CD4-positive, alpha-beta memory T cell (primary cell): ENCODE measurements at regions of chr1 and their contacts with region 1.

Region 1: DNA sequence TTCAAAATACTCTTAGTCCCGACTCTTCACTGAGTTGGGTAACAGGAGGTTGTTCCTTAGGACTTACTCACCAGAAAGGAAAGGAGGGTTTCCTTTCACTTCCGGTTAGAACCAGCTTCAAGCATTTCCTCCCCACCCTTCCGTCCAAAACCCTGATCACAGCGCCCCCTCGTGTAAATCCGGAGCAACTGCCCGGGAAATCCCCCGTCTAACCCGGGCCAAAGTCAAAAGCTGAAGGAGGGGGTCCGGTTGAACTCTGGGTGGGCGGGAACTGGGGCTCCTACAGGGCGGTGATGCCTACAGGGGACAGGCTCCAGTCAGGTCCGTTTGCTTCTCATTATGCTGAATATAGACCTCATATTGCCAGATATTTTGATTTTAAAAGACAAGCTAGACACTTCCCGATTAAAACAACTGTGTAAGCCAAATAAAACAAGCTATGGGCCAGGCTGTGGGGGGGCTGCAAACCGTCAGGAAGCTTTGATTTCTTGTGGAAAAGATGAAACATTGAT is 15.0 kb upstream of the MTARC2 start:
- DNase-seq: peak; percentile 71 to 77 (median 76)
- H3K4me3 ChIP-seq: peak overlapping the region in 1 of 2 donors; percentile 10
- H3K4me3 Mint-ChIP-seq: peak overlapping the region; percentile 46 to 79 (median 72)
- H3K27ac ChIP-seq: no peak overlapping the region
- H3K27ac Mint-ChIP-seq: peak overlapping the region; percentile 17 to 87 (median 49)
- H3K4me1 ChIP-seq: peaks cover 13% of the 10 kb centered on the region
- H3K4me1 Mint-ChIP-seq: peaks cover 8 to 18% (median 14%) of the 10 kb centered on the region in 4 donors
- H3K27me3 ChIP-seq: no peaks in the 10 kb centered on the region
- H3K27me3 Mint-ChIP-seq: peaks cover 0 to 2% of the 10 kb centered on the region in 2 donors

Region 2: DNA sequence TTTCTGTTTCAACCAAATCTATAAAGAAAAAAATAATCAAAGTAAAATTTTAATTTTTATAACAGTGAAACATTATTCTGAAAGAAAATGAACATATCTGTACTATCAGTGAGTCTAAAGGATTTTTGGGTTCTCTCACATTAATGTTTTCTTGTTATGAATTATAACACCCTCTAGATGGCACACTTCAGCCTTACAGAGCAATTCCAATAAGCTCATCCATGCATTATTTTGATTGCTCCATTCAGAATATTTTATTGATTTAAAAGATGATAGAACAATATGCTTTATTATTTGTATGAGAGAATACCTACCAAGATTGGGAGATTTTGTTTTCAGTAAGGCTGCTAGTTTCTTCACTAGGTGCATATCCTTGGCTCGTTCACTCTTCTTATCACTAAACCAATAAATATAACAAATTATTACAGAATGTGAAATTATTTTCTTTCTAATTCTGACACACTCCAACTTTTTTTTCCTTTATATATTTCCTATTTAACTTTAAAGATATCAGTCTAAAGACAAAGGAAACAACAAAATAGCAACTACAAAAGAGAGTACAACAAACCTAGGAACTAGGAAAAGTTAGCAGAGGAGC is 543.3 kb before region 1 on chr1:
- CTCF ChIA-PET with region 1: interaction called, 17 read pairs
- POLR2A ChIA-PET with region 1: no interaction called
- intact Hi-C with region 1: loop called (anchors 1 kb)
- DNase-seq: peak in 2 of 5 donors; percentile 4 to 8
- H3K4me3 ChIP-seq: no peak overlapping the region
- H3K4me3 Mint-ChIP-seq: no peak overlapping the region
- H3K27ac ChIP-seq: no peak overlapping the region
- H3K27ac Mint-ChIP-seq: peak overlapping the region in 1 of 7 donors; percentile 22
- H3K4me1 ChIP-seq: no peaks in the 10 kb centered on the region
- H3K4me1 Mint-ChIP-seq: peaks cover 0 to 3% (median under 1%) of the 10 kb centered on the region in 4 donors
- H3K27me3 ChIP-seq: no peaks in the 10 kb centered on the region
- H3K27me3 Mint-ChIP-seq: no peaks in the 10 kb centered on the region

Region 3: GRCh38 chr1:220217383-220217988 is 515.7 kb before region 1 on chr1:
- CTCF ChIA-PET with region 1: interaction called, 5 read pairs
- POLR2A ChIA-PET with region 1: no interaction called
- intact Hi-C with region 1: loop called (anchors 5 kb)
- DNase-seq: peak in 1 of 5 donors; percentile 3
- H3K4me3 ChIP-seq: no peak overlapping the region
- H3K4me3 Mint-ChIP-seq: no peak overlapping the region
- H3K27ac ChIP-seq: no peak overlapping the region
- H3K27ac Mint-ChIP-seq: peak overlapping the region in 2 of 7 donors; percentile 6 to 10
- H3K4me1 ChIP-seq: peaks cover 32% of the 10 kb centered on the region
- H3K4me1 Mint-ChIP-seq: peaks cover 25 to 37% (median 30%) of the 10 kb centered on the region in 4 donors
- H3K27me3 ChIP-seq: no peaks in the 10 kb centered on the region
- H3K27me3 Mint-ChIP-seq: no peaks in the 10 kb centered on the region

Region 4: DNA sequence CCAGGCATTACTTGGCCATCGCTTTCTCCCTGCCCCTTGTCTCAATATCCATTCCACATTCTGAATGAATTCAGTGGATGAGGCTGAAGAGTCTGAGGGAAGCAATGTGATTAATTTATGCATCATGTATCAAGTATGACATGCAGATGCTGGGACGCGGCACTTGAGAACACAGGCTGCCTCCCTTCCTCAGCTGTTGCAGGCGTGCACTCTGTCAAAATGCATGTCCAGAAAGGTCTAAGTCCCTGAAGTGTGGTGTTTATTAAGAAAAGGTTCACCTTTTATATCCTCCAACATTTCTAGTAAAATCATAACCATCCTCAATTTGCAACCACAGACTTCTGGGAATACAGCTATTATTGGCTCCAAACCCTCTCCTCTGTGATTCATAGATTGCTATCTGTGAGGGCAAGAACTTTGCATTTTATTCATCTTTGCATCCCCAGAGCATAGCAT is 438.3 kb before region 1 on chr1:
- CTCF ChIA-PET with region 1: interaction called, 10 read pairs
- POLR2A ChIA-PET with region 1: no interaction called
- intact Hi-C with region 1: no loop called
- DNase-seq: no peak
- H3K4me3 ChIP-seq: no peak overlapping the region
- H3K4me3 Mint-ChIP-seq: no peak overlapping the region
- H3K27ac ChIP-seq: no peak overlapping the region
- H3K27ac Mint-ChIP-seq: no peak overlapping the region
- H3K4me1 ChIP-seq: no peaks in the 10 kb centered on the region
- H3K4me1 Mint-ChIP-seq: peaks cover 0 to 2% (median 0%) of the 10 kb centered on the region in 4 donors
- H3K27me3 ChIP-seq: no peaks in the 10 kb centered on the region
- H3K27me3 Mint-ChIP-seq: peaks cover 12 to 18% of the 10 kb centered on the region in 2 donors

Region 5: GRCh38 chr1:220680085-220680687 is 53.0 kb before region 1 on chr1:
- CTCF ChIA-PET with region 1: interaction called, 22 read pairs
- POLR2A ChIA-PET with region 1: no interaction called
- intact Hi-C with region 1: loop called (anchors 1 kb)
- DNase-seq: peak in 4 of 5 donors; percentile 11 to 39 (median 23)
- H3K4me3 ChIP-seq: no peak overlapping the region
- H3K4me3 Mint-ChIP-seq: no peak overlapping the region
- H3K27ac ChIP-seq: no peak overlapping the region
- H3K27ac Mint-ChIP-seq: peak overlapping the region in 1 of 7 donors; percentile 7
- H3K4me1 ChIP-seq: no peaks in the 10 kb centered on the region
- H3K4me1 Mint-ChIP-seq: peaks cover 0 to 4% (median 2%) of the 10 kb centered on the region in 4 donors
- H3K27me3 ChIP-seq: no peaks in the 10 kb centered on the region
- H3K27me3 Mint-ChIP-seq: peaks cover 0 to 2% of the 10 kb centered on the region in 2 donors

Region 6: GRCh38 chr1:220690140-220691025 is 42.8 kb before region 1 on chr1 and contains the start of gene C1orf115:
- CTCF ChIA-PET with region 1: interaction called, 31 read pairs
- POLR2A ChIA-PET with region 1: no interaction called
- intact Hi-C with region 1: loop called (anchors 1 kb)
- DNase-seq: peak; percentile 71 to 79 (median 74)
- H3K4me3 ChIP-seq: peak within 1 kb of the TSS in 1 of 2 donors; percentile 48
- H3K4me3 Mint-ChIP-seq: peak within 1 kb of the TSS; percentile 79 to 89 (median 84)
- H3K27ac ChIP-seq: no peak within 1 kb of the TSS
- H3K27ac Mint-ChIP-seq: peak within 1 kb of the TSS in 4 of 7 donors; percentile 24 to 77 (median 46)
- H3K4me1 ChIP-seq: peaks cover 15% of the 10 kb centered on the region
- H3K4me1 Mint-ChIP-seq: peaks cover 5 to 13% (median 7%) of the 10 kb centered on the region in 4 donors
- H3K27me3 ChIP-seq: no peaks in the 10 kb centered on the region
- H3K27me3 Mint-ChIP-seq: peaks cover 3 to 7% of the 10 kb centered on the region in 2 donors
- total RNA-seq, gene C1orf115: 1.5 to 2.0 TPM

Region 7: GRCh38 chr1:220696866-220697231 is 36.3 kb before region 1 on chr1:
- CTCF ChIA-PET with region 1: interaction called, 31 read pairs
- POLR2A ChIA-PET with region 1: no interaction called
- intact Hi-C with region 1: no loop called
- DNase-seq: no peak
- H3K4me3 ChIP-seq: no peak overlapping the region
- H3K4me3 Mint-ChIP-seq: no peak overlapping the region
- H3K27ac ChIP-seq: no peak overlapping the region
- H3K27ac Mint-ChIP-seq: no peak overlapping the region
- H3K4me1 ChIP-seq: no peaks in the 10 kb centered on the region
- H3K4me1 Mint-ChIP-seq: peaks cover 0 to 1% (median 0%) of the 10 kb centered on the region in 4 donors
- H3K27me3 ChIP-seq: no peaks in the 10 kb centered on the region
- H3K27me3 Mint-ChIP-seq: peaks cover 0 to 3% of the 10 kb centered on the region in 2 donors

Region 8: GRCh38 chr1:221217029-221217428 is 483.9 kb after region 1 on chr1:
- CTCF ChIA-PET with region 1: no interaction called
- POLR2A ChIA-PET with region 1: no interaction called
- intact Hi-C with region 1: no loop called
- DNase-seq: no peak
- H3K4me3 ChIP-seq: no peak overlapping the region
- H3K4me3 Mint-ChIP-seq: no peak overlapping the region
- H3K27ac ChIP-seq: no peak overlapping the region
- H3K27ac Mint-ChIP-seq: no peak overlapping the region
- H3K4me1 ChIP-seq: no peaks in the 10 kb centered on the region
- H3K4me1 Mint-ChIP-seq: no peaks in the 10 kb centered on the region
- H3K27me3 ChIP-seq: no peaks in the 10 kb centered on the region
- H3K27me3 Mint-ChIP-seq: peaks cover 2 to 3% of the 10 kb centered on the region in 2 donors